Caco-2 (cell line): ENCODE measurements at regions of chr5 and their contacts with region 1.

Region 1: DNA sequence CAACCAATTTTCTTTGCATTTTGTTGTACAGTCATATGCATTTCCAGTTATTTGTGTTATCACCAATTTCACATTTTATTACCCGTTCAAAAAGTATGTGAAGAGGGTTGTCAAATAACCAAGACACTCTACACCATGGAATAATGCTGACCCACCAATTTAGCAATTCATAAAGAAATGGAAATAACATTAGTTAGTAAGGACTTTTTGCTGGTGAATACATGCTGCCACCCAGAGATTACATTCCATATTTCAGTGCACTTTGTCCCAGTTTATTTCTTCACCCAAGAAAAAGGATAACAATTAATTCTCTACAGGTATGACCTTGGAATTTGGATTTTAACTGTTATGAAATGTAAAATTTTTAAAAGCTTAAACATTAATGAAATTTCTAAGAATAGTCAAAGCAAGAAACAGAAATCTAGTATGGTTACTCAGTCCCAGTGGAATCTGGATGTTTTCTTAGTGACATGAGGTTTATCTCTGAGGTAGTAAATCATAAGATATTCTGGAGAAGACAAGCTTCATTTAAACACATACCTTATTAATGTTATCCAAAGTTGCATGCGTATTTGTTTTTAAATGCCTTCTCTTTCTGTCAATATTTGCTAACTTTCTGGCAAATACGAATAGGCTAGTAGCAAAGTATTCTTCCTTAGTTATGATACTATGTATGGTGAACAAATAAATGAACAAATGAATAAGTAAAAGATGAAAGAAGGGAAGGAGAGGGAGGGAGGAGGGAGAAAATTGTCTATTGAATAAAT is 100.6 kb downstream of the CETN3 start:
- DNase-seq: peak in 1 of 2 experiments; percentile 52
- H3K4me3 ChIP-seq: no peak overlapping the region
- H3K4me3 Mint-ChIP-seq: no peak overlapping the region
- H3K27ac Mint-ChIP-seq: peak overlapping the region; percentile 59
- H3K4me1 ChIP-seq: peaks cover 18% of the 10 kb centered on the region
- H3K4me1 Mint-ChIP-seq: peaks cover 25% of the 10 kb centered on the region
- H3K27me3 ChIP-seq: no peaks in the 10 kb centered on the region
- H3K27me3 Mint-ChIP-seq: no peaks in the 10 kb centered on the region
- CTCF ChIP-seq: no peak

Region 2: GRCh38 chr5:88729084-88729828 is 1579.7 kb before region 1 on chr5:
- CTCF ChIA-PET with region 1: no interaction called
- POLR2A ChIA-PET with region 1: no interaction called
- intact Hi-C with region 1: loop called (anchors 1 kb)
- DNase-seq: peak; percentile 58 to 68
- H3K4me3 ChIP-seq: no peak overlapping the region
- H3K4me3 Mint-ChIP-seq: no peak overlapping the region
- H3K27ac Mint-ChIP-seq: no peak overlapping the region
- H3K4me1 ChIP-seq: no peaks in the 10 kb centered on the region
- H3K4me1 Mint-ChIP-seq: no peaks in the 10 kb centered on the region
- H3K27me3 ChIP-seq: no peaks in the 10 kb centered on the region
- H3K27me3 Mint-ChIP-seq: peaks cover 3% of the 10 kb centered on the region
- CTCF ChIP-seq: peak; percentile 69 to 73

Region 3: DNA sequence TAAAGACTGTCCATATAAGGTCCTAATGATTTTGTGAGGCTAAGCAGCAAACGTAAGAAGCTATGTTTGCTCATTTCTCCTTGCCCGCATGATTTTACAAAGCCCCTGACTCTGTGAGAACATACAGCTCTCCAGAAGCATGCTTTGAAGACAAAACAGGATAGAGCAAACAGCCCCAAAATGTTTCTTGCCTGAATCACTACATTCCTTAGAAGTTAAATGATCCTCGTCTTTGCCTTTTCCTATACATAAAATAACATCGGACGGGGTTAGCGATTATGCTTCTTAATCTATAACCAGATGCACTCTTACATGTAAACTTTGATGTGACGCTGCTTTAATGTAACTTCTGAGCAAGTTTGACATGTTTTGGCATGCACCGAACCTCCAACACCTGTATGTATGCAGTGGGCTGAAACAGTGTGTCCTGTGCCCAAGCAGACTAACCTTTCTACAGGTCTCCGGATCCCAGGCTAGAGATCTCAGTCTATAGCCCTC is 253.1 kb before region 1 on chr5:
- CTCF ChIA-PET with region 1: no interaction called
- POLR2A ChIA-PET with region 1: no interaction called
- intact Hi-C with region 1: loop called (anchors 2 kb)
- DNase-seq: peak; percentile 60 to 64
- H3K4me3 ChIP-seq: peak overlapping the region; percentile 10
- H3K4me3 Mint-ChIP-seq: peak overlapping the region; percentile 79
- H3K27ac Mint-ChIP-seq: peak overlapping the region; percentile 91
- H3K4me1 ChIP-seq: peaks cover 28% of the 10 kb centered on the region
- H3K4me1 Mint-ChIP-seq: peaks cover 10% of the 10 kb centered on the region
- H3K27me3 ChIP-seq: no peaks in the 10 kb centered on the region
- H3K27me3 Mint-ChIP-seq: no peaks in the 10 kb centered on the region
- CTCF ChIP-seq: no peak

Region 4: GRCh38 chr5:90337449-90338052 is 28.6 kb after region 1 on chr5:
- CTCF ChIA-PET with region 1: no interaction called
- POLR2A ChIA-PET with region 1: no interaction called
- intact Hi-C with region 1: loop called (anchors 2 kb)
- DNase-seq: peak in 1 of 2 experiments; percentile 42
- H3K4me3 ChIP-seq: no peak overlapping the region
- H3K4me3 Mint-ChIP-seq: no peak overlapping the region
- H3K27ac Mint-ChIP-seq: no peak overlapping the region
- H3K4me1 ChIP-seq: peaks cover 26% of the 10 kb centered on the region
- H3K4me1 Mint-ChIP-seq: peaks cover 25% of the 10 kb centered on the region
- H3K27me3 ChIP-seq: no peaks in the 10 kb centered on the region
- H3K27me3 Mint-ChIP-seq: no peaks in the 10 kb centered on the region
- CTCF ChIP-seq: no peak

Region 5: GRCh38 chr5:90558344-90559192 is 249.6 kb after region 1 on chr5 and contains the start of gene ADGRV1:
- CTCF ChIA-PET with region 1: no interaction called
- POLR2A ChIA-PET with region 1: no interaction called
- intact Hi-C with region 1: loop called (anchors 10 kb)
- DNase-seq: peak; percentile 96 to 97
- H3K4me3 ChIP-seq: peak within 1 kb of the TSS; percentile 65
- H3K4me3 Mint-ChIP-seq: peak within 1 kb of the TSS; percentile 93
- H3K27ac Mint-ChIP-seq: peak within 1 kb of the TSS; percentile 70
- H3K4me1 ChIP-seq: peaks cover 20% of the 10 kb centered on the region
- H3K4me1 Mint-ChIP-seq: peaks cover 30% of the 10 kb centered on the region
- H3K27me3 ChIP-seq: no peaks in the 10 kb centered on the region
- H3K27me3 Mint-ChIP-seq: no peaks in the 10 kb centered on the region
- CTCF ChIP-seq: no peak
- total RNA-seq, gene ADGRV1: 23.2 and 31.1 TPM in 2 replicates